Activated CD8-positive, alpha-beta T cell treated with anti-CD3 and anti-CD28 coated beads for 36 hours (primary cell): ENCODE measurements at regions of chr20 and their contacts with region 1.

Region 1: GRCh38 chr20:18507218-18508021 is at the start of gene SEC23B:
- DNase-seq: peak; percentile 99
- ATAC-seq: peak; percentile 93
- H3K4me3 Mint-ChIP-seq: peak within 1 kb of the TSS; percentile 97
- H3K27ac Mint-ChIP-seq: peak within 1 kb of the TSS; percentile 100
- H3K4me1 Mint-ChIP-seq: peaks cover 38% of the 10 kb centered on the region
- H3K27me3 Mint-ChIP-seq: no peaks in the 10 kb centered on the region
- CTCF ChIP-seq: no peak
- total RNA-seq, gene SEC23B: 88.5 to 89.3 TPM

Region 2: DNA sequence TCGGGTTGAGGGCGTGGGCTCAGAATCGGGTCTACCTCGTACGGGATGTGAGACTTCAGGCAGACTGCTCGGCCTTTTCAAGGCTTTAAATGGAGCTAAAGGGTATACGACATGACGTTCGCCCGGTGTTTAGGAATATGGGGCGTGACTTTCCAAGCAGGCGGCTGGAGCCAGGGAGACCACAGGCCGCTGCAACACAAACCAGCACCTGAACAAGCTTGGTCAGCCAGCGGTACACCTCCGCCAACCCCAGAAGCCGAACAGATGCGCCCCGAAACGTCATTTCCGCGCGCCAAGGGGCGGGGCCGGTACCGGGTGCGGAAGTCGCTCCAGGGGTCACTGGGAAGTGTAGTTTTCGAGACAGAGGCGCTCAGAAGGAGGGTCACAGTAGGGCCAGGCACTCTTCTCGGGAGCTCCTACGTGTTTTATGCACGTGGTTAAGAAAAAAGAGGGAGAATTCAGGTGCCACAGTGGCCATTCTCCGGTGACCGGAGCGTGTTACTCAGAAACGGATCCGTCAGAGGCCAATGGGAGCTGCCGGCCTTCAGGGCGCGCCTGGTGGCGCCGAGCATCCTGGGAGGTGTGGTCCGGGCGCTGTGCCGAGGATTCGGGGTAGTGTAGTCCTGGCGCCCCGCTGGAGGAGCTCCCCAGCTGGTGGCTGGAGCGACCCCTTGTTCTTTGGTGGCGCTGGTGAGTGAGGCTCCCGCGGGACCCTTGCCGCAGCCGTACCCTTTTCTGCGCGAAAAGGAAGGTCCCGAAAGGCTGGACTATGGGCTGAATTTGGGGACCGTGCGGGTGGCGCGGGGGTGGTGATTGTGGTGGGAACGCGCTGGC is 219.3 kb before region 1 on chr20 and contains the start of gene ZNF133:
- CTCF ChIA-PET with region 1: no interaction called
- POLR2A ChIA-PET with region 1: interaction called, 4 read pairs
- intact Hi-C with region 1: loop called (anchors 10 kb)
- DNase-seq: peak; percentile 98
- ATAC-seq: peak; percentile 97
- H3K4me3 Mint-ChIP-seq: peak within 1 kb of the TSS; percentile 96
- H3K27ac Mint-ChIP-seq: peak within 1 kb of the TSS; percentile 99
- H3K4me1 Mint-ChIP-seq: peaks cover 15% of the 10 kb centered on the region
- H3K27me3 Mint-ChIP-seq: peaks cover 10% of the 10 kb centered on the region
- CTCF ChIP-seq: peak; percentile 11
- total RNA-seq, gene ZNF133: 8.0 TPM

Region 3: DNA sequence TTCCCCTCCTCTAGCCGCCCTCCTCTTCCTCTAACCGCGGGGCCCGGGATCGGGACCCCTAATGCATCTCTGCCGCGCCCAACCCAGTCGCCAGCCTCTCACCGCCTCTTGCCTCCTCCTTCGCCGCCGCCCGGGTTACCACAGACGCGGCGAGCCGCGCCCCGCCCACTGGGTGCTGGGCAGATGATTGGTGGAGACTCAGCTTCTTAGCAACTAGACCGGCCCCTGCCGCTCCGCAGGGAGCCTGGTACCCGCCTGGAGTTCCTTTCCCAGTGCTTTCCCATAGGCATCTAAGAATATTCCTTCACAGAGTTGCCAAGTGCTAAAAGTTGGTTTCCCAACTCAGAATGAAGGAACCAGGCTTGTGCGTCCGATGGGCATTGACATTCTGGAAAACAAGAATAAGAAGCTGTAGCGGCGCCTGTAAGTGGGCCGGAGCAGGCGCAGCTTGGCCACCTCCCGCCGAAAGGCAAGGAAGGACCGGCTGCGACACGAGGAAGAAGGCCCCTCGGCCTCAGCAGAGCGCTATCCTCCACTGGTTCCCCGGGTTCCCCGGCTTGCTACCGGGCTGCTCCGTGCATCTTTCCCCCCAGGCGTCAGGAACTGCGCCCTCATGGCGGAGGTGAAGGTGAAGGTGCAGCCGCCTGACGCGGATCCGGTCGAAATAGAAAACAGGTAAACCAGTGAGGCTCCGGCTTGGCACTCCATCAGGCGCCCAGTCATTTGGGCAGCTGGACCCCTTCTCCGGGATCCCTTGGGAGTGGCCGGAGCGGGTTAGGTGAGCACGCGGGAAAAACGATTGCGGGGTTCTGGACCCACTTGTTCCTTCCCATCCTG is 40.3 kb before region 1 on chr20 and contains the starts of genes DZANK1 and POLR3F:
- CTCF ChIA-PET with region 1: interaction called, 13 read pairs
- POLR2A ChIA-PET with region 1: interaction called, 15 read pairs
- intact Hi-C with region 1: loop called (anchors 1 kb)
- DNase-seq: peak; percentile 96
- ATAC-seq: peak; percentile 98
- H3K4me3 Mint-ChIP-seq: peak within 1 kb of the TSS; percentile 91
- H3K27ac Mint-ChIP-seq: peak within 1 kb of the TSS; percentile 91
- H3K4me1 Mint-ChIP-seq: peaks cover 18% of the 10 kb centered on the region
- H3K27me3 Mint-ChIP-seq: no peaks in the 10 kb centered on the region
- CTCF ChIP-seq: no peak
- total RNA-seq, gene DZANK1: 1.4 to 1.8 TPM
- total RNA-seq, gene POLR3F: 8.8 to 10.1 TPM

Region 4: DNA sequence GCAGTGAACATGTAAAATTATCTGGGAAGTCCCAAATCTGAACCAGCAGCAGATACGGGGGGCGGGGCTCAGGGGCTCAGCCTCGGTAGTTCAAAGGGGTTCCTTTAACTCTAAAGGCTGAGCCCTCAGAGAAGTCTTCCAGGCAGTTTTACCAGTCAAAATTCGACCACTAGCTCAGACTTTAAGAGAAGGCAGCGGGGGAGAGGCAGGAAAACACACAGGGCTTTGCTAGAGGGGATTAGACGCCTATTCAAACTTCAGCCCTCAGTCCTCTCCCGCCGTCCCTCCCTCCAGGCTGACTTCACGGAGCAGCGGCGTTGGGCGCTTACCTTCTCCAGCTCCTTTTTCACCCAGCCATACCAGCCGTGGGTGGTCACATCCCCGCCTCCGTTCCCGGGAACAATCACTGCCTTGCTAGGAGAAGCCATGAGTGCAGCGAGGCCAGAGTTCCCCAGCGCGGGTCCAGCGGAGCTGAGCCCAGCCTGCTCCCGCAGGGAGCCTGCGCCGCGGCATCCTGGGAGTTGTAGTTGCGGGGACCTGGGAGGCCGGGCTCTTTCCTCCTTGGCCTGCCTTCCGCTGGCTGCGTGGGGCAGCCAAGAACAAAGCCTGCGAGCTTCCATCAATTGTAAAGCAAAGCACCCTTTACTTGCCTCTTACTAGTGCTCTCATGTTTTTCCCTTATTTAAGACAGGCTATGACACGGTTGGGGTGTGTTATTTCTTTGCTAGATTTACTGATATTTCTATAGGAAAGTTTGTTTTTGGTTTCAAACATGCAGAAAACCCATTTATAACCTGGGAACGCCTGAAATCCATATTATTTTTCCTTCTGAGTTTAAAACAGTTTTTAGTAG is 10.5 kb before region 1 on chr20 and contains the start of gene RBBP9:
- CTCF ChIA-PET with region 1: interaction called, 33 read pairs
- POLR2A ChIA-PET with region 1: interaction called, 43 read pairs
- intact Hi-C with region 1: no loop called
- DNase-seq: peak; percentile 86
- ATAC-seq: peak; percentile 99
- H3K4me3 Mint-ChIP-seq: peak within 1 kb of the TSS; percentile 99
- H3K27ac Mint-ChIP-seq: peak within 1 kb of the TSS; percentile 90
- H3K4me1 Mint-ChIP-seq: peaks cover 11% of the 10 kb centered on the region
- H3K27me3 Mint-ChIP-seq: no peaks in the 10 kb centered on the region
- CTCF ChIP-seq: no peak
- total RNA-seq, gene RBBP9: 15.8 to 17.5 TPM

Region 5: GRCh38 chr20:18566892-18567742 is 59.7 kb after region 1 on chr20 and contains the start of gene SMIM26:
- CTCF ChIA-PET with region 1: no interaction called
- POLR2A ChIA-PET with region 1: interaction called, 13 read pairs
- intact Hi-C with region 1: loop called (anchors 5 kb)
- DNase-seq: peak; percentile 96
- ATAC-seq: peak; percentile 99
- H3K4me3 Mint-ChIP-seq: peak within 1 kb of the TSS; percentile 82
- H3K27ac Mint-ChIP-seq: peak within 1 kb of the TSS; percentile 98
- H3K4me1 Mint-ChIP-seq: peaks cover 8% of the 10 kb centered on the region
- H3K27me3 Mint-ChIP-seq: no peaks in the 10 kb centered on the region
- CTCF ChIP-seq: no peak
- total RNA-seq, gene SMIM26: 56.5 to 56.6 TPM

Region 6: DNA sequence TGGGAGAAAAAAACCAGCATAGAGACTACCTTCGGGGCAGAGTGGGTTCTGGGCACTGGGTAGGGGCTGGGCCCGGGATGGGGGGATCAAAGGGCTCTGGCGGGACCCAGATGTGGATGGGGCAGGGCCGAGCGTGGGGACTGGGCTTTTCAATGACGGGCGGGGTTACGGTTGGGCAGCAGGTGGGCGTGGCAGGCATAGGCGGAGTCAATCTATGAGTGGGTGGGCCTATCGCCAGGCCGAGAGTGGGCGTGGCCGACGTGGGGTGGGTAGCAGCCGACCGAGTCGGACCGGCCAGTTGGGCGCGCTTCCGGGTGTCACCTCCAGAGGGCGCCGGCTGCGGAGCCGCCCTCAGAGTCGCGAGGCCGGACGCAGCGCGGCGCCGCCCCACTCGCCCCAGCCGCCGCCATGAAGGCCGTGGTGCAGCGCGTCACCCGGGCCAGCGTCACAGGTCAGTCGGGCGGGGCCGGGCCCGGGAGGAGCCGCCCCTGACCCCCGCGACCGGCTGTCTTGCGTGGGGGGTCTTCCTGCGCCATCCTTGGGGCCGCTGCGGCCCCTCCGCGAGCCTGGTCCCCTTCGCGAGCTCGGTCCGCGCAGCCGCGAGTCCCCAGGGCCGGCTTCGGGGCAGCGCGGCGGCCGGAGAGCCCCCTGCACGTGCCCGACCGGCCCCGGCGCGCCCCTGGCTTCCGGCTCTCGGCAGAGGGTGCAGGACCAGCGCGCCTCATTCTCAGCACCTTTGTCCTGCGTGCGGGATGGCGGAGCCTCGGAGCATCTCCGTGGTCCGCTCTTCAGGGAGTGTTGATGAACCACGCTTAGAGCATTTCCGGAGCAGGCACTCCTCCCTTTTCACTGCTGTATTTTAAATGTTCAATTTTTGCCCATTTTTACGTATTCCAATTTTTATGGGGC is 80.5 kb after region 1 on chr20 and contains the start of gene DTD1:
- CTCF ChIA-PET with region 1: interaction called, 3 read pairs
- POLR2A ChIA-PET with region 1: no interaction called
- intact Hi-C with region 1: loop called (anchors 5 kb)
- DNase-seq: peak; percentile 95
- ATAC-seq: peak; percentile 94
- H3K4me3 Mint-ChIP-seq: peak within 1 kb of the TSS; percentile 89
- H3K27ac Mint-ChIP-seq: peak within 1 kb of the TSS; percentile 86
- H3K4me1 Mint-ChIP-seq: peaks cover 29% of the 10 kb centered on the region
- H3K27me3 Mint-ChIP-seq: peaks cover 6% of the 10 kb centered on the region
- CTCF ChIP-seq: peak; percentile 67
- total RNA-seq, gene DTD1: 52.3 to 53.5 TPM